A673 (cell line): ENCODE measurements at regions of chr10 and their contacts with region 1.

Region 1: GRCh38 chr10:12264204-12264940 is 68.4 kb downstream of the CDC123 start:
- DNase-seq: peak; percentile 95
- H3K4me3 ChIP-seq: peak overlapping the region; percentile 36
- H3K27ac ChIP-seq: peak overlapping the region; percentile 56
- H3K4me1 ChIP-seq: peaks cover 12% of the 10 kb centered on the region
- H3K27me3 ChIP-seq: no peaks in the 10 kb centered on the region
- CTCF ChIP-seq: peak; percentile 87

Region 2: DNA sequence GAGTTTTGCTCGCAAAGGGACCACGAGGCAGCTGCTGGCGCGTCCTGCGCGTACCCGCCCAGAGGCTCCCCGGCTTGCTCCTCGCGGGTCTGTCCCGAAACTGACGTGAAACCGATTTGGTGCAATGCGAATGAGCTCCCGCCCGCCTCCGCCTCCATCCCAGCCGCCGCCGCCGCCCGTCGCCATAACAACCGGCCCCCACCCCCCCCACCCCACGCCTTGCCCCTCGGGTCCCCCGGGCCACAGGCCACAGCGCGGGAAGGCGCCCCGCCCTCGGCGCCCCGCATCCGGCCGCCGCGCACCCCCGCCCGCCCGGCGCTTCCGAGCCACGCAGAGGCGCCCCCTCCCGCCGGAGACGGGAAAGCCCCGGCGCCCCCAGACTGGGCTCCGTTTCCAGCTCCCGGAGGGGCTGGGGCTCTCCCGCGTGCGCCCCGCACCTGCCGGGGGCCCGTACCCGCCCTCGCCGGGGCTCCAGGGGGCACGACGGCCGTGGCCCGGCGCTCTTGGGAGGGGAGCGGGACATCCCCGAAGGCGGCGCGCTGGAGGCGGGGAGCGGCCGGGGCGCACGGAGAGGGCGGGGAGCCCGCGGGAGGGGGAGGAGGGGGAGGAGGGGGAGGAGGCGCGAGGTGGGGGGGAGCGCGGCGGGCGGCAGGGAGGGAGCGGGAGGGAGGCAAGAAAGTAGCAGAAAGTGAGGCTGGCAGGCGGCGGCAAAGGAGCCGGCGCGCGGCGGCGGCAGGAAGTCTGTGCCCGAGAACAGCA is 84.7 kb after region 1 on chr10 and contains the start of gene CAMK1D:
- CTCF ChIA-PET with region 1: interaction called, 3 read pairs
- POLR2A ChIA-PET with region 1: interaction called, 14 read pairs
- intact Hi-C with region 1: no loop called
- DNase-seq: peak; percentile 90
- H3K4me3 ChIP-seq: peak within 1 kb of the TSS; percentile 98
- H3K27ac ChIP-seq: peak within 1 kb of the TSS; percentile 80
- H3K4me1 ChIP-seq: peaks cover 19% of the 10 kb centered on the region
- H3K27me3 ChIP-seq: no peaks in the 10 kb centered on the region
- CTCF ChIP-seq: peak; percentile 44; the same call in 1 of the 2 replicates
- total RNA-seq, gene CAMK1D: 23.7 and 27.0 TPM in 2 replicates

Region 3: GRCh38 chr10:12656518-12657142 is 392.3 kb after region 1 on chr10:
- CTCF ChIA-PET with region 1: interaction called, 22 read pairs
- POLR2A ChIA-PET with region 1: no interaction called
- intact Hi-C with region 1: loop called (anchors 2 kb)
- DNase-seq: peak; percentile 75
- H3K4me3 ChIP-seq: no peak overlapping the region
- H3K27ac ChIP-seq: no peak overlapping the region
- H3K4me1 ChIP-seq: peaks cover 14% of the 10 kb centered on the region
- H3K27me3 ChIP-seq: no peaks in the 10 kb centered on the region
- CTCF ChIP-seq: peak; percentile 85

Region 4: DNA sequence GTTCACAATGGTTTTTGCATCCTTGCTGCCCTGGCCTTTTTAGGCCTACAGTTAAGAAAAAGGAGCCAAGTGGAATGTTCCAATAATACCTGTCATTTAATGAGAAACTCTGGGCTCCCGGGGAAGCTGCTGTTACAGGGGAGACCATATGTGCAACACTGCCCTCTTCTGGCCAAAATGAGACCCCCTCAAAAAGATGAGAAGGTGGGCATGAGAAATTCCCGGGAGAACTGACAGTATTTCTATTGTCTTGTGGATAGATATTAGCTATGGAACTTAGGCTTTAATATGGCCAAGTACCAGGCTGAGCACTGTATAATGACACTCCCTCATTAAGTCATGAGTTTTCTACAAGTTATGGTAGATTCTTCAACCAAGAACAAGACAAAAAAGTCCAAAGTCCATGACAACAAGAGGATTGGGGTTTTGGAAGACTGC is 637.8 kb after region 1 on chr10:
- CTCF ChIA-PET with region 1: interaction called, 11 read pairs
- POLR2A ChIA-PET with region 1: no interaction called
- intact Hi-C with region 1: loop called (anchors 2 kb)
- DNase-seq: peak; percentile 81
- H3K4me3 ChIP-seq: no peak overlapping the region
- H3K27ac ChIP-seq: no peak overlapping the region
- H3K4me1 ChIP-seq: no peaks in the 10 kb centered on the region
- H3K27me3 ChIP-seq: no peaks in the 10 kb centered on the region
- CTCF ChIP-seq: peak; percentile 86

Region 5: GRCh38 chr10:13074561-13075451 is 810.4 kb after region 1 on chr10:
- CTCF ChIA-PET with region 1: interaction called, 10 read pairs
- POLR2A ChIA-PET with region 1: no interaction called
- intact Hi-C with region 1: no loop called
- DNase-seq: peak; percentile 85
- H3K4me3 ChIP-seq: no peak overlapping the region
- H3K27ac ChIP-seq: no peak overlapping the region
- H3K4me1 ChIP-seq: peaks cover 2% of the 10 kb centered on the region
- H3K27me3 ChIP-seq: no peaks in the 10 kb centered on the region
- CTCF ChIP-seq: peak; percentile 94